GM13976 (cell line): ENCODE measurements at regions of chr17 and their contacts with region 1.

Region 1: GRCh38 chr17:27601069-27601975 is 29.7 kb upstream of the LGALS9 start:
- DNase-seq: peak; percentile 77
- CTCF ChIP-seq: peak; percentile 87

Region 2: DNA sequence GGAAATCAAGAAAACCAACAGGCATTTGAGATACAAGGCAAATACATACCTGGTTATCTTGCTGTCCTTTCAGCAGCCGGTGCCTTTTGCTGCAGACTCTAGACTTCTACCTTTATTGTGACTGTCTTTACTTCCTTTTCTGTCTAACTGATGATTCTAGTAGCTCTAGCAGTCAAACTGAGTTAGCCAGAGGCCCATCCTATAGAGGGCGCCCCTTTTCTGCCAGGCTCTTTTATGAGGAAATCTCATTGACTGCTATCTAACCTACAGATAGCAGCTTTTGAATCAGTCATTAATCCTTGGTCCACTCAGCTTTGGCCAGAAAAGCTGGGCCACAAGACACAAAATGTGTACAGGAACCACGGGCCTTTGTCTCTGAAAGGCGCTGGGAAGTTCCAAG is 394.9 kb before region 1 on chr17:
- in situ Hi-C with region 1: loop called (anchors 25 kb)
- DNase-seq: peak; percentile 29
- CTCF ChIP-seq: peak; percentile 7

Region 3: DNA sequence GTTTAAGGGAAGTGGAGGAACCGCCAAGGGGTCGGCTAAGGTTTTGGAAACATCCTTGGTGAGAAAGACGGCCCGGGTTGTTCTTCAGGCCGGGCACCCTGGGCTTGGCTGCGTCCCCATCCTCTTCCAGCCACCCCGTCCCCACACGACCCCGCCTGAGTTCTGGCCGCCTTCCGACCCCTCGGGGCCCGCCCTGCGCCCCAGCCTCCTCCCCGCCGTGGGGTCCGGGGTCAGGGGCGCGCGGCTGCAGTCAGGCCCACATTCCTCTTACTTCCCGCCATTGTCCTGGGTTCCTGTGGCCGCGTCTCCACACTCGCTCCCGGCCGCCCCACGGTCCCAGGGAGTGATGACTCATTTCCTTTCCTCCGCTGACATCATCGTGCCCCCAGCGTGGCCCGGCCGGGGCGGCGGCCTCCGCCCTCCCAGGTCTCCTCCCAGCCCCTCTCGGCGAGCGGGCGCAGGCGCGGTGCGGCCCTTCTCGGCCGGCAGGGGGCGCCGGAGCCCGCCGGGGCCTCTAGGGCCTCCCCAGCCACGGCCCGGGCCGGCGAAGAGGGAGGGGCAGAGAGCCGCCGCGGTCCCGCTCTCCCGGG is 247.8 kb before region 1 on chr17:
- in situ Hi-C with region 1: loop called (anchors 10 kb)
- DNase-seq: peak; percentile 98
- CTCF ChIP-seq: peak; percentile 92

Region 4: DNA sequence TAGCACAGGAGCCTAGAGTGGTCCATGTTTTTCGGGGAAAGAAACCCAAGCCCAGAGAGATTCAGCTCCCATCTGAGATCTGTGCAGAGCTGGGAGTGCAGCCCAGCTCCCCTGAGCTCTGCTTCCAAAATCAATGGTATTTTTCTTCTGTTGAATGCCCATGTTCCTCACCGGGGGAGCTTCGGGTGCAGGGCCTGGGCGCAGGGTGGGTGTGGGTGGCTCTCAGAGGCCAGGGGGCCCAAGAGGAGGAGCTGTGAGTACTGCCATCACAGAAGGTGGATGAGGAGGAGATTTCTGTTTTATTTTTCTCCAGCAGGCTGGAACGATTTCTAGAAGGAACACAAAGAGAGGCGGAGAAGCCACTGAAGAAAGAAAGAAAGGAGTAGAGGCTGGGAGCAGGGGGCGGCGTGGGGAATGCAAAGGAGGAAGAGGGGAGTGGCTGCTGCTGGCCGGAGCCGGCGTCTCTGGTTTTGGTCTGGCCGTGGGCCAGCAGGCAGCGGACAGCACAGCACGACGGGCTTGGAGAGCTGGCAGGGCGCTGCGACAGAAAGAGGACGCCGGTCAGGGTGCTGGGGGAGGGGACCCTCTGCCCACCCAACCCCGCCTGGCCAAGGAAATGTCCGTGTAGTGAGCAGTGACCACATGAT is 221.3 kb before region 1 on chr17:
- in situ Hi-C with region 1: loop called (anchors 10 kb)
- DNase-seq: no peak
- CTCF ChIP-seq: no peak

Region 5: GRCh38 chr17:27455914-27456680 is 145.2 kb before region 1 on chr17 and contains the start of gene KSR1:
- in situ Hi-C with region 1: loop called (anchors 10 kb)
- DNase-seq: peak; percentile 94
- CTCF ChIP-seq: peak; percentile 30

Region 6: GRCh38 chr17:27552469-27552779 is 48.9 kb before region 1 on chr17:
- in situ Hi-C with region 1: no loop called
- DNase-seq: no peak
- CTCF ChIP-seq: no peak

Region 7: GRCh38 chr17:27654654-27655524 is 53.6 kb after region 1 on chr17:
- in situ Hi-C with region 1: loop called (anchors 10 kb)
- DNase-seq: peak; percentile 90
- CTCF ChIP-seq: peak; percentile 82